ENCODE measurements at regions of chr22 and their contacts with region 1.

Region 1: DNA sequence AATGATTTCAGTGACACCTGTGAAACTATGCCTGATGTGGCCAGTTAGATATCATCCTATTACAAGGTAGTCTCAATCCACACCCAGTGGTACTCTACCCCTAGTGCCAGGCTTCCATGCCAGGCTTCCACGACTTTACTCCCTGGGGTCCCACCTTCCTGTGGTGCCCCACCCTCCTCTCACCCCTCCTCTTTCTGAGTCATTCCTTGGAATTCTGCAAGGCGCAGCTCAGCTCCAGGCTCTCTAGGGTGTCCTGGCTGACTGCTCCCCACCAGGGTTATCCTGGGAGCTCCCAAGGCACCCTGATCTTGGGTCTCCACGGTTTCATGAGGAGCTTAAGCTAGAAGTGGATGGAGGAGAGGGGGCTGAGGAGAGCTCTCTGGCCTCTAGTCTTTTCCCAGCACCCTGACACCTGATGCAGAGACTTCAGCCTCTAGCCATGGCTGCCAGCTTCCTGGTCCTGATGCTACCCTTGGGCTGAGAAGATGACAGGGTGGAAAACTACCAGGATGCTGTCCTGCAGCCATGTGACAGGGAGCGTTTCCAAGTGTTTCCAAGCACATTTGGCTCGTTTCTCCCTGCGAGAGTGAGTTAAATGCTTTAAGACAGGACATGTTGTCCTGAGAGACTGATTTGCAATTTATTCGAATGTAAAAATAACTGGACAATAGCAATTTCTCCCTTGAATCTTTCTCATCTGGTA is 1461.2 kb downstream of the TBC1D22A start:
- DNase-seq: no peak
- H3K4me3 ChIP-seq: no peak overlapping the region
- H3K27ac ChIP-seq: no peak overlapping the region
- H3K4me1 ChIP-seq: no peaks in the 10 kb centered on the region
- H3K27me3 ChIP-seq: peaks cover 0 to 24% of the 10 kb centered on the region in 2 donors
- CTCF ChIP-seq: no peak
- POLR2A ChIP-seq: no peak

Region 2: DNA sequence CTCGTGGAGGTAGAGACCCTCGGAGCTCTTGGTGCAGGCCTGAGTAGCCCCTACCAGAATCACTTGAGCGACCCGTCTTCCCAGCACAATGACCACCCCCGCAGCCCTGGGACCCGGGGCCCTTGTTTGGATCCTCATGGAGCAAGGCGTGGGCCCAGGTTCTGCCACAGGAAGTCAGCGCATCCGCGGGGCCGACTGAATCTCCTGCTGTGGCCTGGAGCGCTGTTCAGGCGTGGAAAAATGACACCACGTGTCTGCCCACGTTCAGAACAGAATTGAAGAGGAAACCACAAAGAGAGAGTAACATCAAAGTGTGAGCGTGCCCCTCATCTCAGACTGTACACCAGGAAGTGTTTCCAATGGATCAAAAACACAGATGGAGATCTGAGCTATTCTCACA is 18.0 kb after region 1 on chr22:
- intact Hi-C with region 1: no loop called
- DNase-seq: no peak
- H3K4me3 ChIP-seq: no peak overlapping the region
- H3K27ac ChIP-seq: no peak overlapping the region
- H3K4me1 ChIP-seq: no peaks in the 10 kb centered on the region
- H3K27me3 ChIP-seq: peaks cover 0 to 18% of the 10 kb centered on the region in 2 donors
- CTCF ChIP-seq: no peak
- POLR2A ChIP-seq: no peak

Region 3: GRCh38 chr22:49297871-49298721 is 1074.5 kb after region 1 on chr22:
- intact Hi-C with region 1: loop called (anchors 10 kb)
- DNase-seq: peak; percentile 15 to 49
- H3K4me3 ChIP-seq: no peak overlapping the region
- H3K27ac ChIP-seq: no peak overlapping the region
- H3K4me1 ChIP-seq: no peaks in the 10 kb centered on the region
- H3K27me3 ChIP-seq: peaks cover 0 to 37% of the 10 kb centered on the region in 2 donors
- CTCF ChIP-seq: no peak
- POLR2A ChIP-seq: no peak